ENCODE measurements at regions of chr6 and their contacts with region 1.

Region 1: GRCh38 chr6:45445749-45446549 is 68.2 kb upstream of the SUPT3H start:
- DNase-seq: no peak
- H3K4me3 Mint-ChIP-seq: peak overlapping the region; percentile 17
- H3K27ac Mint-ChIP-seq: peak overlapping the region; percentile 85
- H3K4me1 Mint-ChIP-seq: peaks cover 58% of the 10 kb centered on the region
- H3K27me3 Mint-ChIP-seq: no peaks in the 10 kb centered on the region

Region 2: DNA sequence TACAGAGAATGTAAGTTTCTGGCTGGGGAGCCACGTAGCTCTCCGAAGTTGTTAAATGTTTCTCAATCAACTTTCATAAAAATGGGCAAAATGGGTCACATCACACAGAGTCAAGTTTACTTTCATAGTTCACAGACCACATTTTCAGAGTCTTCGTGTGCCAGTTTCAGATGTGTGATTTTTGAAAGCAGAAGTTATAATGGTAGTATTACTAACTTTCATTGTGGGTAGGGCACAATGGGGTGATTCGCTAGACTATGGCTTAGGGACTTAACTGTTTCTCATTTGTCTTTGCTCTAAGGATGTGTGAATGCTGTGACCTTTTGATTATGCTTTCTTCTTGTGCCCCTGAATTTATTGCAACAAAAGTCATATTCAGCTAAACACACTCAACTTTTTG is 40.8 kb after region 1 on chr6:
- intact Hi-C with region 1: loop called (anchors 5 kb)
- DNase-seq: no peak
- H3K4me3 Mint-ChIP-seq: no peak overlapping the region
- H3K27ac Mint-ChIP-seq: no peak overlapping the region
- H3K4me1 Mint-ChIP-seq: peaks cover 45% of the 10 kb centered on the region
- H3K27me3 Mint-ChIP-seq: no peaks in the 10 kb centered on the region

Measured in activated T-helper 1 cell treated with anti-CD3 and anti-CD28 coated beads, Interleukin-12 subunit alpha, Interleukin-12 subunit beta, Interleukin-2, Interleukin-4 antibody, amounts not matched to agents 30 ng/mL and 10 ng/mL and 1 ng/mL, durations not matched to agents 14 hours and 24 hours and 36 hours (primary cell).